ENCODE measurements at regions of chr15 and their contacts with region 1.

Region 1: DNA sequence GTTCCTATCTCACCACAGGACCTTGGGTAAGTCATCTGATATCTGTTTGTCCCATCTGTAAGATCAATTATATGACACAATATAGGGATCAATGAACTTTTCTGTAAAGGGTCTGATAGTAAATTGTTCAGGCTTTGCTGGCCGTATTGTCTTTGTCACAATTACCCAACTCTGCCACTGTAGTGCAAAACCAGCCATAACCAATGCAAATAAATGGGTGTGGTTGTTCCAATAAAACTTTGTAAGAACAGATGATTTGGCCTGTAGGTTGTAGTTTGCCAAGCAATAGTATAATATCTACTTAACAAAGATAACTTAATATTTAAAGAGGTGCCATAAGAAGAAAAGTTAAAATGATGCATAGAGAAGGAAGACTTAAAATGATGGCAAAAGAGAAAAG is 210.8 kb downstream of the VPS13C start:
- DNase-seq: no peak

Region 2: GRCh38 chr15:60507596-60508424 is 1341.6 kb before region 1 on chr15:
- intact Hi-C with region 1: loop called (anchors 5 kb)
- DNase-seq: peak in 25 of 42 donors; percentile 18 to 78 (median 49)

Measured in head of caudate nucleus (tissue), 42 donors.